ENCODE measurements at regions of chr10 and their contacts with region 1.

Region 1: GRCh38 chr10:73296946-73297345 is 44.5 kb upstream of the MRPS16 start:
- DNase-seq: no peak
- H3K4me3 ChIP-seq: no peak overlapping the region
- H3K27ac ChIP-seq: no peak overlapping the region
- H3K4me1 ChIP-seq: no peaks in the 10 kb centered on the region
- H3K27me3 ChIP-seq: no peaks in the 10 kb centered on the region
- CTCF ChIP-seq: no peak

Region 2: GRCh38 chr10:72665925-72666324 is 631.0 kb before region 1 on chr10:
- CTCF ChIA-PET with region 1: no interaction called
- POLR2A ChIA-PET with region 1: no interaction called
- intact Hi-C with region 1: no loop called
- DNase-seq: peak; percentile 11 to 94
- H3K4me3 ChIP-seq: no peak overlapping the region
- H3K27ac ChIP-seq: peak overlapping the region; percentile 28
- H3K4me1 ChIP-seq: peaks cover 15% of the 10 kb centered on the region
- H3K27me3 ChIP-seq: no peaks in the 10 kb centered on the region
- CTCF ChIP-seq: no peak

Region 3: DNA sequence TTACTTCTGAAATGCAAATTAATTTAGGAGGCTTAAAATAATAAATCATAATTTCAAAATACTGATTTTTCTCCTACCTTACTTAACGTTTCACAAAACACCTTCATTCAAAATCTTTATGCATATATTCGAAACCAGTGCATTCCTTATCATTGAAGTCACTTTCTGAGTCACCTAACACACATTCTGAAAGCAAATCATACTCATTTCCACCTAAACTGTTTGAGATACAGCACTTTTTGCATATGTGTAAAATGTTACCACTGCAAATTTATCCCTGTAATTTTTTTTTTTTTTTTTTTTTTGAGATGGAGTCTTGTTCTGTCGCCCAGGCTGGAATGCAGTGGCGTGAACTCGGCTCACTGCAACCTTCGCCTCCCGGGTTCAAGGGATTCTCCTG is 183.2 kb after region 1 on chr10:
- CTCF ChIA-PET with region 1: interaction called, 10 read pairs
- POLR2A ChIA-PET with region 1: no interaction called
- intact Hi-C with region 1: no loop called
- DNase-seq: peak in 1 of 2 experiments; percentile 61
- H3K4me3 ChIP-seq: no peak overlapping the region
- H3K27ac ChIP-seq: 0 out of 2 replicates have a peak overlapping the region, but pooled peaks have one; percentile 9
- H3K4me1 ChIP-seq: no peaks in the 10 kb centered on the region
- H3K27me3 ChIP-seq: no peaks in the 10 kb centered on the region
- CTCF ChIP-seq: no peak

Measured in PC-9 (cell line).